ENCODE measurements at regions of chr17 and their contacts with region 1.

Region 1: GRCh38 chr17:57584050-57584551 is 161.0 kb downstream of the CCDC182 start:
- DNase-seq: no peak
- ATAC-seq: no peak
- H3K4me3 ChIP-seq: no peak overlapping the region
- H3K27ac ChIP-seq: no peak overlapping the region
- H3K4me1 ChIP-seq: peaks cover 67% of the 10 kb centered on the region
- H3K27me3 ChIP-seq: no peaks in the 10 kb centered on the region
- CTCF ChIP-seq: no peak
- EP300 ChIP-seq: no peak
- POLR2A ChIP-seq: no peak
- RAD21 ChIP-seq: no peak

Region 2: DNA sequence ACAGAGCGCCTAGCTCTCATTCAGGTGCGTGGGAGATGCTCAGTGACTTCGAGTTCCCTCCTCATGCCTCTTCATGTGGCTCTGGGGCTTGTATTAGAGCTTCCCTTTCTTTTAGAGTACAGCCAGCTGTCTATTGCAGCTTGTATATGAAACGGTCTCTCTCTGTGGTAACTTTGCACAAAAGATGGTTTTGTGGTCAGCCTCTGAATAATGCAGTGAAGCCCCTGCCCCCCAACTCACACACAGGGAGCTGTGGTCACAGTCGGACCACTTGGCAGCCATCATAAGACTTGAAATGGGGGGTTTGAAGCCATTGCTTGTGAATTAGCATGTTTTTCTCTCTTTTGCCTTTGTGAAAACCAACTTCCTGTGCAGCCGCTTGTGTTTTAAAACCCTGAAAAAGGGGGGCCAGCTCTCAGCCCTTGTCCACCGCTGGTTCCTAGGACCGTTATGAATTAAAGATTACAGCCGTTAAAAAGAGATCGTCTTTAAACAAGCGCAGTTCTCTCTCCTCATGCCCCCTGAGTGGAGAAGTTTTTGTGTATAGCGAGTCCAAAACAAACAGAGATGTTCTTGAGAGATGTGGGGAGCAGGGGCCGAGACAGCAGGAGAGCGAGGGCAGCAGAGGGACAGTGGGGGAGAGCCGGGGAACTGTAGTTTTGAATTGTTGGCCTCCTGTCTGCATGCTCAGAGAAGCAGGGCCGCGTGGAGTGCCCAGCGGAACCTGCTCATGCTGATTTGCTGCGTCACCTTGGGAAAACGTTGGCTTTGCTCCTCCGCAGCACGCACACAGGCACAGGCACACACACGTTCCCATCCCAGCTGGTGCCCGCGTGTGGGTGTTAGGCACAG is 128.8 kb before region 1 on chr17:
- CTCF ChIA-PET with region 1: no interaction called
- POLR2A ChIA-PET with region 1: no interaction called
- in situ Hi-C with region 1: no loop called
- intact Hi-C with region 1: loop called (anchors 5 kb)
- DNase-seq: no peak
- ATAC-seq: no peak
- H3K4me3 ChIP-seq: no peak overlapping the region
- H3K27ac ChIP-seq: no peak overlapping the region
- H3K4me1 ChIP-seq: peaks cover 22% of the 10 kb centered on the region
- H3K27me3 ChIP-seq: no peaks in the 10 kb centered on the region
- CTCF ChIP-seq: no peak
- EP300 ChIP-seq: no peak
- POLR2A ChIP-seq: no peak
- RAD21 ChIP-seq: no peak

Measured in HepG2 (cell line).